ENCODE measurements at regions of chr2 and their contacts with region 1.

Region 1: DNA sequence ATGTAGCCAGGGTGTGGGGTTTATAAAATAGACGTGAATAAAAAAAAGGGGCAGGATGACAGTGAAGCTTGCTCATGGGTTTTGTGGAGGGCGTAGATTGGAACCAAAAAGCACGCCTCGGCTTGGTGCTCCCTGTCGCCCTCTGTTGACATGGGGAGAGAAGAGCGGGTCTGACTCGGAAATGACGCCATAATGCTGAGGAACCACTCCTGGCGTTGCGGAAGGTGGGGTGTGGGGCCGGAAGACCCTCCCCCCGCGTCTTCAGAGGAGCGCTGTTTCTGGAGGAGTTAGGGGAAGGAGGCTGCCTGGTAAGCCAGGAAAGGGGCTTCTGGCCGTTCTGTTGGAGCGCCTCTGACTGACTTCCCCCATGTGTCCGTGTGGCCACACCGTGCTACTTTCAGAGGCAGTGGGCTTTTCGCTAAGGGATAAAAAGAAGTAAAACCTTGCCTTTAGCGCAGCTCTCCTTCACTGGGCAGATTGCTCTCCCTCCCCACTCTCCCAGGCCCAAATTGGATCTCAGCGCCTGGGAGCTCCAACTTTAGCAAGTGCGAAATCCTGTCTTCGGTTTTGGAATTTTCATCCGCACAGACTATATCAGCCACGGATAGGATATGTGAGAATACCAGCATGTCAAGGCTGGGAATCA is 42.8 kb downstream of the PLEKHA3 start:
- DNase-seq: peak; percentile 89 to 91
- ATAC-seq: peak; percentile 96
- H3K4me3 ChIP-seq: peak overlapping the region; percentile 66 to 84
- H3K27ac ChIP-seq: peak overlapping the region in 1 of 2 donors; percentile 60
- H3K4me1 ChIP-seq: no peaks in the 10 kb centered on the region
- H3K27me3 ChIP-seq: no peaks in the 10 kb centered on the region

Region 2: GRCh38 chr2:178450774-178451525 is 72.1 kb before region 1 on chr2 and contains the starts of genes PJVK and PRKRA:
- intact Hi-C with region 1: loop called in 1 of 2 experiments (anchors 5 kb)
- DNase-seq: peak; percentile 99 to 100
- ATAC-seq: peak; percentile 99
- H3K4me3 ChIP-seq: peak within 1 kb of the TSS; percentile 55 to 81
- H3K27ac ChIP-seq: peak within 1 kb of the TSS; percentile 96 to 99
- H3K4me1 ChIP-seq: peaks cover 3 to 10% of the 10 kb centered on the region in 2 donors
- H3K27me3 ChIP-seq: no peaks in the 10 kb centered on the region
- total RNA-seq, gene PJVK: 2.2 to 8.4 TPM
- total RNA-seq, gene PRKRA: 55.6 to 69.9 TPM